Dorsolateral prefrontal cortex (tissue), 120 donors: ENCODE measurements at regions of chr1 and their contacts with region 1.

Region 1: GRCh38 chr1:75426688-75427087 is 184.2 kb downstream of the SLC44A5 start:
- DNase-seq: peak in 7 of 10 donors; percentile 8 to 68 (median 43)
- H3K4me3 ChIP-seq: no peak overlapping the region
- H3K27ac ChIP-seq: peak overlapping the region in 17 of 59 donors; percentile 2 to 63 (median 23)
- H3K27me3 ChIP-seq: no peaks in the 10 kb centered on the region
- CTCF ChIP-seq: no peak

Region 2: DNA sequence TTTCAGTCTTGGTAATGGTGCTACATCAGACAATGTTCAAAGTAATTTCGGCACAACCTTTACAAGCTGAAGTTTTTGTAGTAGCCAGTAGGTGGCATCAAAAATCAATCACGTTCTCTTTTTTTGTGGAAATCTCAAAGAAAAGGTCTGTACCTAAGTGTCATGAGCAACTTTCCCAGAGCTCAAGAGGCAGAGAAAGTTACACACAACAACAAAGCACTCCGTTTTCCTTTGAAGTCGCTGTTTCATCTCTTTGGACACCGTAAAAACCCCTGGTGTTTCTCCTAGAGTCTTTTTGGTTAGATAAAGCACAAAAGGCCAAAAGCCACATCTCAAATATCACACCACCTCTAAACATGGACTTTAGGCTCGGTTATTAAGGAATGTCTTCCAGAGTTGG is 160.9 kb before region 1 on chr1:
- intact Hi-C with region 1: no loop called
- DNase-seq: no peak
- H3K4me3 ChIP-seq: no peak overlapping the region
- H3K27ac ChIP-seq: no peak overlapping the region
- H3K27me3 ChIP-seq: no peaks in the 10 kb centered on the region
- CTCF ChIP-seq: peak; percentile 43 to 81 (median 68)

Region 3: DNA sequence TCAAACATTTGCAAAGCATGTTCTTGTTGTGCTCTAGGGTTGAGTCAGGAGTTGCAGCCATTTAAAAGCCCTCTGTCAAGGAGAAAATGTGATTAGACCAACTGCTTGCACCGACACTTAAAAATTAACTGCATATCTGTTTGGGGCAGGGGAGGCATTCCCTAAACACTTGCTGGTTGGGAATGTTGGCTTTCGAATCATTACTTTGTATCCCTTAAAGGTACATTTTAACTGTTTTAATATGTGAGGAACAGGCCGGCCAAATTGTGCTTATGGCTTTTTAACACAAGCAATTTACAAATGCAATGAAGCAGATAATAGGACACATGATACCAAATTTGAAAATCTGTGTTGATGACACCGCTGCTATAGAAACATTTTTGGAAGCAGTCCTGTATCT is 133.4 kb before region 1 on chr1:
- intact Hi-C with region 1: no loop called
- DNase-seq: no peak
- H3K4me3 ChIP-seq: no peak overlapping the region
- H3K27ac ChIP-seq: no peak overlapping the region
- H3K27me3 ChIP-seq: no peaks in the 10 kb centered on the region
- CTCF ChIP-seq: no peak

Region 4: GRCh38 chr1:75438355-75438754 is 11.7 kb after region 1 on chr1:
- intact Hi-C with region 1: loop called in 1 of 2 experiments (anchors 1 kb)
- DNase-seq: no peak
- H3K4me3 ChIP-seq: no peak overlapping the region
- H3K27ac ChIP-seq: no peak overlapping the region
- H3K27me3 ChIP-seq: no peaks in the 10 kb centered on the region
- CTCF ChIP-seq: no peak

Region 5: DNA sequence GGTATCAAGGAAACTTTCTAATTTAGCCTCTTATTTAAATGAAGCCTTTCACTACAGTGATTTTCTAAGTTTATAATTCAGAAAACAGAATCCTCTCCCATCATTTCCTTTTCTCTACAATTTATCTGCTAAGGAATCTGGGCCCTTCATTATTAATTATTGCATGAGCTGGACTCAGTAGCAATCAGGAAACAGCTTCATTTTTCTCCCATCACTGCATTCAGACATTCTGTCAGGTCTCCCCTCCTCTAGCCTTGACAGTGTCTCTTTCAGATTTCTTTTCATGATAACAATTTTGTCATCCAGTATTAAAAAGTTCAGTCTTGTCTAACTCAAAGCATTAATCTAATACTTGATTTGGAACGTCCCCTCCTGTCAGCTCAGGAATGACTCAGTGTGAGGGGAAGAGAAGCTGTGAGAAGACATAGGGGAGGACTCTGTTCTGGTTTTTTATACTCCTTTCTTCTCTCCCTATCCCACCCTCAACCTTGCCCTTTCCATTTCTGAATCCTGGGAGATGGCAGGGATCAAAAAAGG is 156.1 kb after region 1 on chr1:
- intact Hi-C with region 1: no loop called
- DNase-seq: no peak
- H3K4me3 ChIP-seq: no peak overlapping the region
- H3K27ac ChIP-seq: no peak overlapping the region
- H3K27me3 ChIP-seq: no peaks in the 10 kb centered on the region
- CTCF ChIP-seq: no peak

Region 6: GRCh38 chr1:75731881-75732280 is 305.2 kb after region 1 on chr1:
- intact Hi-C with region 1: no loop called
- DNase-seq: no peak
- H3K4me3 ChIP-seq: no peak overlapping the region
- H3K27ac ChIP-seq: no peak overlapping the region
- H3K27me3 ChIP-seq: no peaks in the 10 kb centered on the region
- CTCF ChIP-seq: no peak